Right ventricle myocardium inferior (tissue), 1 donor: ENCODE measurements at regions of chr19 and their contacts with region 1.

Region 1: GRCh38 chr19:18521885-18522624 is at the start of gene ELL:
- DNase-seq: peak; percentile 100
- ATAC-seq: peak; percentile 95
- total RNA-seq, gene ELL: 8.4 TPM

Region 2: GRCh38 chr19:18460900-18461299 is 61.2 kb before region 1 on chr19:
- intact Hi-C with region 1: loop called (anchors 2 kb)
- DNase-seq: no peak
- ATAC-seq: no peak

Region 3: GRCh38 chr19:18469069-18469846 is 52.8 kb before region 1 on chr19:
- intact Hi-C with region 1: loop called (anchors 2 kb)
- DNase-seq: peak; percentile 90
- ATAC-seq: peak; percentile 27

Region 4: GRCh38 chr19:18493438-18494266 is 28.4 kb before region 1 on chr19:
- intact Hi-C with region 1: loop called (anchors 2 kb)
- DNase-seq: peak; percentile 63
- ATAC-seq: peak; percentile 23

Region 5: GRCh38 chr19:18557474-18558201 is 35.6 kb after region 1 on chr19 and contains the start of gene KXD1:
- intact Hi-C with region 1: loop called (anchors 5 kb)
- DNase-seq: peak; percentile 99
- ATAC-seq: peak; percentile 98
- total RNA-seq, gene KXD1: 50.3 TPM

Region 6: DNA sequence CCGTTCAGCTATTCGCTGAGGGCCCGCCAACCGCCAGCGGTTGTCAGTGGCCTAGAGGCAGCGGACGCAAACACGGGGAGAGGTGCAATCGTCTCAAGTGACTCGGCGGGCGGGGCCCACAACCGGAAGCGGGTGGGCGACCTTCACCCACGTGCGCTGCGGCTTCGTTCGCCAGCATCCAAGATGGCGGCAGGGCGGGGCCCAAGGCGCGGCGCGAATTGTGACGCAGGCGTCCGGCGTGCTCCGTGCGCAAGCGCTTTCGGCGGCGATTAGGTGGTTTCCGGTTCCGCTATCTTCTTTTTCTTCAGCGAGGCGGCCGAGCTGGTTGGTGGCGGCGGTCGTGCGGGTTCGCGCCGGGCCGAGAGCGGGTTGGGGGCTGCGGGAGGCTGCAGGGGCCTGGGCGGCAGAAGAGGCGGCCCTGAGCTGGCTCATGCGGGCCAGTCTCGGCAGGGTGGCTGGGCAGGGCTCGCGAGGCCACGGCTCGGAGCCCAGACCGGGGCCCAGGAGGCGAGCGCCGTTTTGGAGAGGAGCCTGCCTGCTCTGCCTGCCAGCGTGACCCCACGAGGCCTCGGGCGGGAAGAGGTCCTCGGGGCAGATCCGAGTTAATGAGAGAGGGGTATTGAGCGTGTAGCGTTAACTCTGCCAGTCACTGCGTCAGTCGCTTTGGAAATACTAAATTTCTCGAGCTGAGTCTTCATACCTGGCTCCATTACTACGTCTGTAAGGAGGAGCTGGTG is 49.7 kb after region 1 on chr19 and contains the start of gene UBA52:
- intact Hi-C with region 1: loop called (anchors 5 kb)
- DNase-seq: peak; percentile 98
- ATAC-seq: peak; percentile 96
- total RNA-seq, gene UBA52: 737 TPM